IMR-90 (cell line): ENCODE measurements at regions of chr12 and their contacts with region 1.

Region 1: GRCh38 chr12:88993651-88994050 is 358.6 kb downstream of the DUSP6 start:
- DNase-seq: peak; percentile 83
- ATAC-seq: peak; percentile 82
- H3K4me3 ChIP-seq: no peak overlapping the region
- H3K27ac ChIP-seq: no peak overlapping the region
- H3K4me1 ChIP-seq: no peaks in the 10 kb centered on the region; the same call in 1 of the 2 replicates
- H3K27me3 ChIP-seq: no peaks in the 10 kb centered on the region
- CTCF ChIP-seq: peak; percentile 73
- POLR2A ChIP-seq: no peak
- RAD21 ChIP-seq: peak; percentile 86

Region 2: GRCh38 chr12:88153959-88154358 is 839.7 kb before region 1 on chr12:
- CTCF ChIA-PET with region 1: interaction called, 3 read pairs
- POLR2A ChIA-PET with region 1: no interaction called
- dilution Hi-C with region 1: no loop called
- in situ Hi-C with region 1: loop called (anchors 5 kb)
- intact Hi-C with region 1: loop called (anchors 1 kb)
- DNase-seq: peak; percentile 70
- ATAC-seq: no peak
- H3K4me3 ChIP-seq: no peak overlapping the region
- H3K27ac ChIP-seq: no peak overlapping the region
- H3K4me1 ChIP-seq: no peaks in the 10 kb centered on the region
- H3K27me3 ChIP-seq: no peaks in the 10 kb centered on the region
- CTCF ChIP-seq: peak; percentile 59
- POLR2A ChIP-seq: no peak
- RAD21 ChIP-seq: peak; percentile 67

Region 3: GRCh38 chr12:88325076-88325815 is 668.4 kb before region 1 on chr12:
- CTCF ChIA-PET with region 1: no interaction called
- POLR2A ChIA-PET with region 1: no interaction called
- dilution Hi-C with region 1: no loop called
- in situ Hi-C with region 1: no loop called
- intact Hi-C with region 1: loop called (anchors 10 kb)
- DNase-seq: peak; percentile 98
- ATAC-seq: peak; percentile 89
- H3K4me3 ChIP-seq: peak overlapping the region; percentile 3; the same call in 1 of the 2 replicates
- H3K27ac ChIP-seq: peak overlapping the region; percentile 99
- H3K4me1 ChIP-seq: peaks cover 4% of the 10 kb centered on the region
- H3K27me3 ChIP-seq: no peaks in the 10 kb centered on the region
- CTCF ChIP-seq: 0 out of 2 replicates have a peak, but pooled peaks have one; percentile 15
- POLR2A ChIP-seq: no peak
- RAD21 ChIP-seq: peak; percentile 18; the same call in 1 of the 2 replicates

Region 4: GRCh38 chr12:88633312-88633711 is 360.3 kb before region 1 on chr12:
- CTCF ChIA-PET with region 1: interaction called, 6 read pairs
- POLR2A ChIA-PET with region 1: no interaction called
- dilution Hi-C with region 1: no loop called
- in situ Hi-C with region 1: no loop called
- intact Hi-C with region 1: loop called (anchors 2 kb)
- DNase-seq: peak; percentile 18
- ATAC-seq: no peak
- H3K4me3 ChIP-seq: no peak overlapping the region
- H3K27ac ChIP-seq: no peak overlapping the region
- H3K4me1 ChIP-seq: peaks cover under 1% of the 10 kb centered on the region
- H3K27me3 ChIP-seq: no peaks in the 10 kb centered on the region
- CTCF ChIP-seq: peak; percentile 49
- POLR2A ChIP-seq: no peak
- RAD21 ChIP-seq: peak; percentile 33; the same call in 1 of the 2 replicates